Naive thymus-derived CD8-positive, alpha-beta T cell (primary cell): ENCODE measurements at regions of chr20 and their contacts with region 1.

Region 1: DNA sequence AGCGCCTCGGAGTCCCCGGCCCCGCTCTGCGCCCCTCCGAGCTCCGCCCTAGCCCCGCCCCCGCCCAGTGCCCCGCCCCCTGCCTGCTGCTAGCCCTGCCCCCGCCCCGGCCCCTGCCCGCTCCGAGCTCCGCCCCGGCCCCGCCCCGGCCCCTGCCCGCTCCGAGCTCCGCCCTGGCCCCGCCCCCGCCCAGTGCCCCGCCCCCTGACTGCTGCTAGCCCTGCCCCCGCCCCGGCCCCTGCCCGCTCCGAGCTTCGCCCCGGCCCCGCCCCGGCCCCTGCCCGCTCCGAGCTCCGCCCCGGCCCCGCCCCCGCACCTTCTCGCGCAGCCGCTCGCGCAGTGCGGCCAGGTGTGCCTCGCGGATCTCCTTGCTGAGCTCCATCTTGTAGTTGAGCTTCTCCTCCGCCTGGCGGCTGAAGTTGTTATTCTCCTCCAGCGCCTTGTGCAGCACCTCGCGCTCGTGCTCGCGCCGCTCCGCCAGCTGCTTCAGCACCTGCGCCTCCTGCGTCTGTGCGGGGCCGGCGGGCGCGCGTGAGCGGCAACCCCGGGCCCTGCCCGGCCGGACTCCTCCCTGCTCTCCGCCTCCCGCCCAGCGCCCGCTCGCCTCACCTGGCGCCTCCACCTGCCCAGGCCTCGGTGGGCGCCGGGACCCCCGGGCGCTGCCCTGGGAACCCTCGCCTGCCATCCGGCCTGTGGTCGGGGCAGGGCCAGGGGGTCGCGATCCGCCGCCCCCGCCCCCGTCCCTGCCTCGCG is 11.3 kb downstream of the STMN3 start:
- DNase-seq: peak; percentile 87 to 99 (median 98)
- ATAC-seq: peak; percentile 68 to 70
- H3K4me3 Mint-ChIP-seq: peak overlapping the region; percentile 46 to 93 (median 74)
- H3K27ac Mint-ChIP-seq: peak overlapping the region in 8 of 10 donors; percentile 37 to 94 (median 83)
- H3K4me1 Mint-ChIP-seq: peaks cover 23 to 40% (median 38%) of the 10 kb centered on the region in 4 donors
- H3K27me3 Mint-ChIP-seq: no peaks in the 10 kb centered on the region

Region 2: GRCh38 chr20:63178889-63179686 is 462.9 kb before region 1 on chr20:
- POLR2A ChIA-PET with region 1: no interaction called
- DNase-seq: peak; percentile 63 to 85 (median 70)
- ATAC-seq: peak; percentile 88 to 90
- H3K4me3 Mint-ChIP-seq: peak overlapping the region in 9 of 10 donors; percentile 47 to 71 (median 66)
- H3K27ac Mint-ChIP-seq: no peak overlapping the region
- H3K4me1 Mint-ChIP-seq: peaks cover 5 to 19% (median 14%) of the 10 kb centered on the region in 4 donors
- H3K27me3 Mint-ChIP-seq: peaks cover 7 to 60% (median 23%) of the 10 kb centered on the region in 5 donors

Region 3: GRCh38 chr20:63520504-63520933 is 121.4 kb before region 1 on chr20 and contains the start of gene PPDPF:
- POLR2A ChIA-PET with region 1: interaction called, 23 read pairs
- DNase-seq: peak; percentile 74 to 94 (median 86)
- ATAC-seq: peak; percentile 78
- H3K4me3 Mint-ChIP-seq: peak within 1 kb of the TSS; percentile 74 to 89 (median 82)
- H3K27ac Mint-ChIP-seq: peak within 1 kb of the TSS; percentile 44 to 92 (median 84)
- H3K4me1 Mint-ChIP-seq: peaks cover 12 to 24% (median 14%) of the 10 kb centered on the region in 4 donors
- H3K27me3 Mint-ChIP-seq: peaks cover 0 to 2% (median 0%) of the 10 kb centered on the region in 5 donors
- polyA plus RNA-seq, gene PPDPF: 47.4 to 93.1 (median 78.1) TPM

Region 4: DNA sequence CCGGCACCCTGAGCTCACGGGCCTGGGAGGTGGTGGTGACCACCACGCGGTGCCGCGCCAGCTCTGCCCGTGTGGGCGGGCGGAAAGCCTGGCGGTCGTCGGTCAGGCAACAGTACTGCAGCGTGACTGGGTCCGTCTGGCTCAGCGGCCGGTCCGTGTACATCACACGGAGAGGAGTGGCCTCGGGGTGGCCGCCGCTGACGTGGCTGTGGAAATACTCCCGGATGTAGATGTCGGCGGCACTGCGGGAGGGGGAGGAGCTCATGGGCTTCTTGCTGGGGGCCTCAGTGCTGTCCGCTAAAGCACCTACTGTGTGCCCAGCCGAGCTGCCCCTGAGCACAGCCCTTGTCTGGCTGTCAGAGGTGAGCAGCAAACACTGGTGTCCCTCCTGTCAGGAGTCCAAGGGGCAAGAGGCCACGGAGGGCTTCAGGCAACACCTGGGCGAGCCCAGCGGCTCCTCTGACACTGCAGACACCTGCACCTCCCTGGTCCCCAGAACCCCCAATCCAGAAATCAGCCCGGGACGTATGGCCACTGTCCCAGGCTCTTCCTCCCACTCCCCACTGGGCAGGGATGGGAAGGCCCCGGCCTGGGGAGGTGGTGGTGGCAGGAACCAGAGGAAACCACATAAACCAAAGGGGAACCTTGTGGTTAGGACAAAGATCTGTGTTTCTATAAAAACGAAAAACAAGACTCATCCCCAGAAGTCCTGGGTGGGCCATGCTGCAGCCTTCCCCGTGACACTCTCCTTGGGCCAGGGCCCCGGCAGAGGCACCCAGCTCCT is 74.4 kb before region 1 on chr20:
- POLR2A ChIA-PET with region 1: interaction called, 13 read pairs
- DNase-seq: peak in 9 of 10 donors; percentile 19 to 74 (median 45)
- ATAC-seq: peak; percentile 68 to 72
- H3K4me3 Mint-ChIP-seq: peak overlapping the region; percentile 68 to 89 (median 82)
- H3K27ac Mint-ChIP-seq: peak overlapping the region in 8 of 10 donors; percentile 18 to 70 (median 42)
- H3K4me1 Mint-ChIP-seq: peaks cover 9 to 32% (median 28%) of the 10 kb centered on the region in 4 donors
- H3K27me3 Mint-ChIP-seq: no peaks in the 10 kb centered on the region

Region 5: GRCh38 chr20:63627129-63627750 is 14.7 kb before region 1 on chr20:
- POLR2A ChIA-PET with region 1: interaction called, 740 read pairs
- DNase-seq: peak; percentile 90 to 99 (median 95)
- ATAC-seq: peak; percentile 82 to 83
- H3K4me3 Mint-ChIP-seq: peak overlapping the region; percentile 91 to 99 (median 98)
- H3K27ac Mint-ChIP-seq: peak overlapping the region; percentile 43 to 99 (median 96)
- H3K4me1 Mint-ChIP-seq: peaks cover 16 to 59% (median 45%) of the 10 kb centered on the region in 4 donors
- H3K27me3 Mint-ChIP-seq: no peaks in the 10 kb centered on the region

Region 6: GRCh38 chr20:63657937-63658748 is 16.2 kb after region 1 on chr20 and contains the start of gene RTEL1:
- POLR2A ChIA-PET with region 1: interaction called, 43 read pairs
- DNase-seq: peak; percentile 73 to 98 (median 86)
- ATAC-seq: peak; percentile 82 to 85
- H3K4me3 Mint-ChIP-seq: peak within 1 kb of the TSS; percentile 90 to 99 (median 96)
- H3K27ac Mint-ChIP-seq: peak within 1 kb of the TSS; percentile 92 to 98 (median 96)
- H3K4me1 Mint-ChIP-seq: peaks cover 18 to 49% (median 39%) of the 10 kb centered on the region in 4 donors
- H3K27me3 Mint-ChIP-seq: no peaks in the 10 kb centered on the region
- polyA plus RNA-seq, gene RTEL1: 3.2 to 6.8 (median 4.4) TPM

Region 7: DNA sequence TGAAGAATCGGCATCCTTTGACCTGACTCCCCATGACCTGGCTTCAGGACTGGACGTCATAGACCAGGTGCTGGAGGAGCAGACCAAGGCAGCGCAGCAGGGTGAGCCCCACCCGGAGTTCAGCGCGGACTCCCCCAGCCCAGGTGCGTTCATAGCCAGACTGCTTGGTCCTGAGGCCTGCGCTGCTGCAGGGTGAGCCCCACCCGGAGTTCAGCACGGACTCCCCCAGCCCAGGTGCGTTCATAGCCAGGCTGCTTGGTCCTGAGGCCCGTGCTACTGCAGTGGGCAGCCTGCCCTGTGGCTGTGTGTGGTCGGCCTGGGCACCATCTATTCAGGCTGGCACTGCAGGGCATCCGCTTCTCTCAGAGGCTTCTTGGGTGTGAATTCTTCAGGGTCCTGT is 32.0 kb after region 1 on chr20:
- POLR2A ChIA-PET with region 1: no interaction called
- DNase-seq: no peak
- ATAC-seq: no peak
- H3K4me3 Mint-ChIP-seq: no peak overlapping the region
- H3K27ac Mint-ChIP-seq: no peak overlapping the region
- H3K4me1 Mint-ChIP-seq: no peaks in the 10 kb centered on the region
- H3K27me3 Mint-ChIP-seq: peaks cover 0 to 1% (median 0%) of the 10 kb centered on the region in 5 donors

Region 8: GRCh38 chr20:63767456-63767855 is 125.5 kb after region 1 on chr20:
- POLR2A ChIA-PET with region 1: no interaction called
- DNase-seq: no peak
- ATAC-seq: no peak
- H3K4me3 Mint-ChIP-seq: no peak overlapping the region
- H3K27ac Mint-ChIP-seq: no peak overlapping the region
- H3K4me1 Mint-ChIP-seq: no peaks in the 10 kb centered on the region
- H3K27me3 Mint-ChIP-seq: no peaks in the 10 kb centered on the region

Region 9: DNA sequence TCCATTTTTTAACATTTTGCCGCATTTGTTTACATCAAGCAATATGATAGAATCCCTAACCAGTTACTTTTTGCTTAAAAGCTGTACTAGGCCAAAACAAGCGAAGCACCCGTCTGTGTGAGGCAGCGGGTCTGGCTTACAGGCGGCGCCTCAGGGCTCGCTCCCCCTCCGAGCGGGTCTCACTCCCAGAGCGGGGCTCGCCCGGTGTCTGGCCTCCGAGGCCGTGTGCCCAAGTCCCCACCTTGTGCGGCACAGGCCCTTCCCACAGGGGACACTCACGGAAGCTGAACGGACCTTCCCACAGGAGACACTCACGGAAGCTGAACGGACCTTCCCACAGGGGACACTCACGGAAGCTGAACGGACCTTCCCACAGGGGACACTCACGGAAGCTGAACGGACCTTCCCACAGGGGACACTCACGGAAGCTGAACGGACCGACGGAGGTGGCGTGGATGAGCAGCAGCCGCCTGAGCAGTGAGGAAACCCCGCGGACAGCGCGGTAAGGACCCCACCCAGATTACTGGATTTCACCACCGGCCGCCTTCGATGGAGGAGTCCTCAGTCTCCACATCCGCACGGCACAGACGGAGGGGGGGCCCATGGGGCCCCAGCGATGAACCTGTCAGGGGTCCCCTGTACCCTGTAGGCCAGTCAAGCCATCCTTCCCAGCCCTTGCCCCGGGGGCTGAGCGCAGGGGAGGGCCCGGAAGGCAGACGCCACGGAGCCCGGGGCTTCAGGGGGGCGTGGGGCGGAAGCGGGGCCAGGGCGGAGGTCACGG is 165.9 kb after region 1 on chr20:
- POLR2A ChIA-PET with region 1: no interaction called
- DNase-seq: no peak
- ATAC-seq: no peak
- H3K4me3 Mint-ChIP-seq: no peak overlapping the region
- H3K27ac Mint-ChIP-seq: no peak overlapping the region
- H3K4me1 Mint-ChIP-seq: peaks cover 5 to 12% (median 7%) of the 10 kb centered on the region in 4 donors
- H3K27me3 Mint-ChIP-seq: peaks cover 2 to 22% (median 10%) of the 10 kb centered on the region in 5 donors